ENCODE measurements at regions of chr10 and their contacts with region 1.

Region 1: GRCh38 chr10:79468024-79468560 is 22.7 kb upstream of the ZCCHC24 start:
- DNase-seq: no peak
- ATAC-seq: no peak; the same call in 1 of the 2 replicates
- H3K4me3 Mint-ChIP-seq: no peak overlapping the region
- H3K27ac Mint-ChIP-seq: no peak overlapping the region
- H3K4me1 Mint-ChIP-seq: no peaks in the 10 kb centered on the region
- H3K27me3 Mint-ChIP-seq: peaks cover 5% of the 10 kb centered on the region; the same call in 1 of the 2 replicates
- CTCF ChIP-seq: no peak

Region 2: GRCh38 chr10:79149662-79150443 is 318.2 kb before region 1 on chr10:
- CTCF ChIA-PET with region 1: no interaction called
- POLR2A ChIA-PET with region 1: no interaction called
- DNase-seq: peak; percentile 36
- ATAC-seq: peak; percentile 55
- H3K4me3 Mint-ChIP-seq: no peak overlapping the region
- H3K27ac Mint-ChIP-seq: 0 out of 2 replicates have a peak overlapping the region, but pooled peaks have one; percentile 93
- H3K4me1 Mint-ChIP-seq: peaks cover 15% of the 10 kb centered on the region
- H3K27me3 Mint-ChIP-seq: no peaks in the 10 kb centered on the region
- CTCF ChIP-seq: no peak

Region 3: GRCh38 chr10:79400146-79401004 is 67.7 kb before region 1 on chr10:
- CTCF ChIA-PET with region 1: interaction called, 12 read pairs
- POLR2A ChIA-PET with region 1: no interaction called
- DNase-seq: peak; percentile 71
- ATAC-seq: 0 out of 2 replicates have a peak, but pooled peaks have one; percentile 5
- H3K4me3 Mint-ChIP-seq: no peak overlapping the region
- H3K27ac Mint-ChIP-seq: no peak overlapping the region
- H3K4me1 Mint-ChIP-seq: peaks cover 44% of the 10 kb centered on the region
- H3K27me3 Mint-ChIP-seq: peaks cover 6% of the 10 kb centered on the region; the same call in 1 of the 2 replicates
- CTCF ChIP-seq: peak; percentile 84

Region 4: DNA sequence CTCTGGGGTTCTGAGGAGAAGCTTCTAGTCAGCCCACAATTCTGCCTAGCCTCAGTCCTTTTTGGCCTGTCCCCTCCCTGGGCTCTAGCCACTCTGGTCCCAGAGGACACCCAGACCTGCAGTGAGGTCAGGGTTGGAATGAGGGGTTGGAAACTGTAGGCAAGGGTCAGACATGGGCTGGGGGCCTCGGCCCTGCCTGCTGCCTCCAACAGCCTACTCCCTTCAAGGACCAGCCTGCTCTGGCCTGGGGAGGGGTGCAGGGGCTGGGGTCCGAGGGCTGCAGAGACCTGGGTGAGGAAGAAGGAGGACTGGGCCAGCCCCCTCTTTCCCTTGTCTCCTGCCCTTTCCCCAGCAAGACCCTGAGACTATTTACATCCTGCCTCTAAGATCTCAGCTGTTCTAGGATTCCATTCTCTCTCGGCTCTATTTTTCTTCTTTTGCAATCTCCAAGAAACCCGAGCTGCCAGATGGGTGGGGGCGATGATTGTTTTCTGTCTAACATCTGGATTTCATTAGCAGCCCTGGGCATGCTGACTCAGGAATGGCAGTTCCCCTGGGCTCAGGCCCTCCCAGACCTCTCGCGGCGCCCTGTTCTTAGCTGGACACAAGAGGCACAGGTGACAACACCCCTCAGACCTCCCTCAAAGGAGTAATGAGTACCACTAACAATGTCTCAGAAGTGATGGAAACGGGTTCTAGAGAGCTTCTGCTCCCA is 45.8 kb before region 1 on chr10:
- CTCF ChIA-PET with region 1: no interaction called
- POLR2A ChIA-PET with region 1: no interaction called
- DNase-seq: no peak
- ATAC-seq: no peak
- H3K4me3 Mint-ChIP-seq: no peak overlapping the region
- H3K27ac Mint-ChIP-seq: peak overlapping the region; percentile 78; the same call in 1 of the 2 replicates
- H3K4me1 Mint-ChIP-seq: peaks cover 11% of the 10 kb centered on the region
- H3K27me3 Mint-ChIP-seq: no peaks in the 10 kb centered on the region
- CTCF ChIP-seq: no peak

Region 5: GRCh38 chr10:79454259-79454658 is 13.8 kb before region 1 on chr10:
- CTCF ChIA-PET with region 1: interaction called, 18 read pairs
- POLR2A ChIA-PET with region 1: interaction called, 3 read pairs
- DNase-seq: no peak
- ATAC-seq: no peak
- H3K4me3 Mint-ChIP-seq: no peak overlapping the region
- H3K27ac Mint-ChIP-seq: no peak overlapping the region
- H3K4me1 Mint-ChIP-seq: peaks cover 5% of the 10 kb centered on the region
- H3K27me3 Mint-ChIP-seq: peaks cover 24% of the 10 kb centered on the region
- CTCF ChIP-seq: no peak

Region 6: GRCh38 chr10:79487296-79488194 is 19.5 kb after region 1 on chr10:
- CTCF ChIA-PET with region 1: interaction called, 67 read pairs
- POLR2A ChIA-PET with region 1: no interaction called
- DNase-seq: peak; percentile 86
- ATAC-seq: peak; percentile 97
- H3K4me3 Mint-ChIP-seq: no peak overlapping the region
- H3K27ac Mint-ChIP-seq: no peak overlapping the region
- H3K4me1 Mint-ChIP-seq: peaks cover 12% of the 10 kb centered on the region
- H3K27me3 Mint-ChIP-seq: no peaks in the 10 kb centered on the region; the same call in none of the 2 replicates
- CTCF ChIP-seq: peak; percentile 81

Measured in WTC11 (cell line).